ENCODE measurements at regions of chr5 and their contacts with region 1.

Region 1: DNA sequence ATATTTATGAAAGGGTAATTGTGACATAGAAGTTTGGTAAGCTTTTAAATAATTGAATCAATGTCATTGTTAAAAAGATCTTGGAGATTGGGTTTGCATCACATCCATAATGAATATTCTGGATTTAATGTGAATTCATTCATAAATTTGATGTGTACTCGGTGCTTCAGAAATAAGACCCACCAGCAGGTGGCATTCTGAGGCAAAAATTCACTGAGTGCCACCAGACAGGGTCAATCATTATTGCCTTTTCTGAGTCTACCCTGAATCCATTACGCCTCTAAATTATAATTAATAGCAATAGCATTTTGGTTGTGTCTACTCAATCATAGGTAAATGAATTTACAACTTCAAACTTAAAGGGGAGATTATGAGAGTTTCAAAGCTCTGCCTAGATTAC is 1.0 kb downstream of the TRPC7 start:
- DNase-seq: no peak
- H3K4me3 ChIP-seq: no peak overlapping the region
- H3K27ac ChIP-seq: no peak overlapping the region
- H3K4me1 ChIP-seq: no peaks in the 10 kb centered on the region
- H3K27me3 ChIP-seq: peaks cover 0 to 4% (median under 1%) of the 10 kb centered on the region in 4 experiments; a peak in 2 of 7 replicates
- CTCF ChIP-seq: peak in 2 of 3 experiments; percentile 44 to 47; a peak in 3 of 4 replicates
- EP300 ChIP-seq: no peak
- POLR2A ChIP-seq: no peak
- RAD21 ChIP-seq: peak; percentile 70 to 72

Region 2: GRCh38 chr5:136123236-136123768 is 241.0 kb before region 1 on chr5:
- CTCF ChIA-PET with region 1: no interaction called
- POLR2A ChIA-PET with region 1: no interaction called
- DNase-seq: no peak
- H3K4me3 ChIP-seq: no peak overlapping the region
- H3K27ac ChIP-seq: no peak overlapping the region
- H3K4me1 ChIP-seq: no peaks in the 10 kb centered on the region
- H3K27me3 ChIP-seq: no peaks in the 10 kb centered on the region; a peak in 1 of 7 replicates
- CTCF ChIP-seq: no peak
- EP300 ChIP-seq: no peak
- POLR2A ChIP-seq: no peak
- RAD21 ChIP-seq: no peak

Region 3: GRCh38 chr5:136332223-136333015 is 31.9 kb before region 1 on chr5:
- CTCF ChIA-PET with region 1: interaction called, 15 read pairs
- POLR2A ChIA-PET with region 1: interaction called, 3 read pairs
- DNase-seq: no peak
- H3K4me3 ChIP-seq: no peak overlapping the region
- H3K27ac ChIP-seq: no peak overlapping the region
- H3K4me1 ChIP-seq: no peaks in the 10 kb centered on the region
- H3K27me3 ChIP-seq: no peaks in the 10 kb centered on the region
- CTCF ChIP-seq: no peak
- EP300 ChIP-seq: no peak
- POLR2A ChIP-seq: no peak
- RAD21 ChIP-seq: no peak

Region 4: GRCh38 chr5:136350343-136350742 is 14.0 kb before region 1 on chr5:
- CTCF ChIA-PET with region 1: interaction called, 28 read pairs
- POLR2A ChIA-PET with region 1: no interaction called
- DNase-seq: no peak
- H3K4me3 ChIP-seq: no peak overlapping the region
- H3K27ac ChIP-seq: no peak overlapping the region
- H3K4me1 ChIP-seq: no peaks in the 10 kb centered on the region
- H3K27me3 ChIP-seq: no peaks in the 10 kb centered on the region; a peak in 1 of 7 replicates
- CTCF ChIP-seq: no peak
- EP300 ChIP-seq: no peak
- POLR2A ChIP-seq: no peak
- RAD21 ChIP-seq: no peak

Region 5: DNA sequence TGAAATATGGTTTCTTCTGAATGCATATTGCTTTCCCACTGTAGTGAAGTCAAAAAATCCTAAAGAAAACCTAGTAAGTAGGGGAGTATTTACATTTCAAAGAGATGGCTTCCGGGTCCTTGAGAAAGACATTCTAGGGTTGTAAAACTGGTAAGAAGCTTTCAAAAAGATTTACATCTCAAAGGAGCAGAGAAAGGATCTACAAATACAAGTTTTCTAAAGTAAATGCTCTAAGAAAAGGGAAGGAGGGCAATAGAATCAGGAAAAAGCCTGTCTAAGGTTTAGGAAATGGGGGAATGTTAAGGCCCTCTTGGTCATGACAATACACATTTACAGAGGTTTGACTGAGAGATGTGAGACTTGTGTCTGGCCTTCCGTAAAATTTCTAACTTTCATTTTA is 17.8 kb after region 1 on chr5:
- CTCF ChIA-PET with region 1: interaction called, 11 read pairs
- POLR2A ChIA-PET with region 1: no interaction called
- DNase-seq: no peak
- H3K4me3 ChIP-seq: no peak overlapping the region
- H3K27ac ChIP-seq: no peak overlapping the region
- H3K4me1 ChIP-seq: peaks cover 0 to 7% (median 0%) of the 10 kb centered on the region in 4 experiments; a peak in 2 of 7 replicates
- H3K27me3 ChIP-seq: peaks cover 0 to 15% (median 8%) of the 10 kb centered on the region in 4 experiments; a peak in 5 of 7 replicates
- CTCF ChIP-seq: no peak
- EP300 ChIP-seq: peak in 1 of 2 experiments; percentile 76; a peak in 1 of 3 replicates
- POLR2A ChIP-seq: no peak
- RAD21 ChIP-seq: no peak

Region 6: DNA sequence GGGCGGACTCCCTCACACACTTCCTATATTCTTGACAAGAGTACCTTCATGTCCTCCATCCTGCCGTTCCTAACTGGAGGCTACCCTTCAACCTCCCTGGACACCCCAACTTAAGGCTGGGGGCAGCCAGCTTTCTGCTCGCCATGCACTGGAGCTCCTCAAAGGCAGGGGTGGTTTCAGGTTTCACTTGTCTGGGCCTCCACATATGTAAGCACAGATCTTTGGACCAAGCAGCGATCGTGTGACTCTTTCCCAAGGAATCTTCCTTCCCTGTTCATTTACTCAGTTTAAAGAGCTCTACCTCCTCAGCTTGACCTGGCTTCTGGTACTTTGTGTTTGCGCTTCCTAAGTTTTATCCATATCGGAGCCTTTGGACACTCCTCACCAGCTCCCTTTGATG is 35.2 kb after region 1 on chr5:
- CTCF ChIA-PET with region 1: no interaction called
- POLR2A ChIA-PET with region 1: no interaction called
- DNase-seq: no peak
- H3K4me3 ChIP-seq: no peak overlapping the region
- H3K27ac ChIP-seq: no peak overlapping the region
- H3K4me1 ChIP-seq: peaks cover 0 to 9% (median 5%) of the 10 kb centered on the region in 4 experiments; a peak in 5 of 7 replicates
- H3K27me3 ChIP-seq: peaks cover 0 to 3% (median under 1%) of the 10 kb centered on the region in 4 experiments; a peak in 1 of 7 replicates
- CTCF ChIP-seq: no peak
- EP300 ChIP-seq: no peak
- POLR2A ChIP-seq: no peak
- RAD21 ChIP-seq: no peak

Region 7: GRCh38 chr5:136424835-136425584 is 60.7 kb after region 1 on chr5:
- CTCF ChIA-PET with region 1: interaction called, 17 read pairs
- POLR2A ChIA-PET with region 1: no interaction called
- DNase-seq: peak; percentile 58 to 97
- H3K4me3 ChIP-seq: no peak overlapping the region
- H3K27ac ChIP-seq: no peak overlapping the region
- H3K4me1 ChIP-seq: peaks cover 0 to 4% (median under 1%) of the 10 kb centered on the region in 4 experiments; a peak in 4 of 7 replicates
- H3K27me3 ChIP-seq: no peaks in the 10 kb centered on the region; a peak in 2 of 7 replicates
- CTCF ChIP-seq: peak; percentile 83 to 92 (median 86)
- EP300 ChIP-seq: no peak
- POLR2A ChIP-seq: no peak
- RAD21 ChIP-seq: peak; percentile 92 to 96

Region 8: GRCh38 chr5:136686192-136686872 is 322.0 kb after region 1 on chr5:
- CTCF ChIA-PET with region 1: interaction called, 13 read pairs
- POLR2A ChIA-PET with region 1: no interaction called
- DNase-seq: peak in 1 of 2 experiments; percentile 49
- H3K4me3 ChIP-seq: no peak overlapping the region
- H3K27ac ChIP-seq: no peak overlapping the region
- H3K4me1 ChIP-seq: no peaks in the 10 kb centered on the region
- H3K27me3 ChIP-seq: no peaks in the 10 kb centered on the region; a peak in 1 of 7 replicates
- CTCF ChIP-seq: peak in 2 of 3 experiments; percentile 65 to 67; a peak in 3 of 4 replicates
- EP300 ChIP-seq: no peak
- POLR2A ChIP-seq: no peak
- RAD21 ChIP-seq: peak; percentile 80 to 85

Region 9: DNA sequence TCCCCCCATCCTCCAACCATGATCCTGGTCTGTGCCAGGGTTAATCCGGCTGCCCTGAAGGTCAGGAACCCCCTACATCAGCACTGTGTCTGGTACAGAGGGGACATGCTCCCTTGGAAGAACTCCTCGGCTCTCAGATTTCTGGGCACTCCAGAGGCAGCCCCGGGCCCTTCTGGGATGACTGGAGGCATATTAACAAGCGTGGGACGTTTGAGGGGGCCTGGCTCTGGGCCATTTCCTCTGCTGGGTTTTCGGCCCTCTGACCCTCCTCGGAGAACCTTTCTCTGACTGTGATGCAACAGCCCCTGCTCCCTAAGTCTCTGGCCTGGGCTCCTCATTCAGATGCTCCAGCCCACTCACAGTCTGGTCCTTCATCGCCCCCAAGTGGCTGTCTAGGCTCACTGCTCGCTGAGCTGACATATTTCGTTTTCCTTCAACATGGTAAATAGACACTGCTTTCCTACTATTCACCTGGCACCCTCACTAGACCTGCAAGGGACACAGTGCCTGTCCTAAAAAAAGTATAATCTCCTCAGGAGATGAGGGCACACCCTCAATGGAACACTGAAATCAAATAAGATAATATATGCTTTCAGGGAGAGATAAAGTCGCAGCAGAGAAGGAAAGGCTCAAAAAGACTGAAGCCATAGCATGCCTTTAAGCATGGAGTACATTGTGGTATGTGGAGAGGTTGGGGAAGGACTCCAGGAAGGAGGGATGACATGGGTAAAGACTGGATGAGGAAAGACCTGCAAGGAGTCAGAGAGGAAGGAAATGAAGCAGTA is 405.8 kb after region 1 on chr5:
- CTCF ChIA-PET with region 1: interaction called, 48 read pairs
- POLR2A ChIA-PET with region 1: no interaction called
- DNase-seq: peak; percentile 53 to 87
- H3K4me3 ChIP-seq: no peak overlapping the region
- H3K27ac ChIP-seq: no peak overlapping the region
- H3K4me1 ChIP-seq: peaks cover 0 to 2% (median 1%) of the 10 kb centered on the region in 4 experiments; a peak in 3 of 7 replicates
- H3K27me3 ChIP-seq: peaks cover 0 to 1% (median 0%) of the 10 kb centered on the region in 4 experiments; a peak in 1 of 7 replicates
- CTCF ChIP-seq: peak; percentile 87 to 96 (median 91)
- EP300 ChIP-seq: no peak
- POLR2A ChIP-seq: no peak
- RAD21 ChIP-seq: peak; percentile 99 to 100

Region 10: DNA sequence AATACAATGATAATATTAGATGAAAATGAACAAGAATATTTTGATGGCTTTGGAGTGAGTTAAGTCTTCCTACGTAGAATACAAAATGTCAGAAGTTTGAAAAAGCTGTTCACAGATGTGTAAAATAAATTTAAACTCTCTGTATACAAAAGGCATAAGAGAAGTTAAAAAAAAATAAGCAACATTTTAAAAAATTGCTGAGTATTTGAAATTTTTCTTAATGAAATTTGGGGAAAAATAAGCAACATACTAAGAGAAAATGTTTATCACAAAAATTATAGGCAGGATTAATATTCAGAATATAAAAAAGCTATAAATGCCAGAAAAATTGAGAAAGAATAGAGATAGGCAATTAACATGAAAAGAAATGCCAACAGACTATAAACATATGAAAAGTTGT is 471.8 kb after region 1 on chr5:
- CTCF ChIA-PET with region 1: no interaction called
- POLR2A ChIA-PET with region 1: no interaction called
- DNase-seq: no peak
- H3K4me3 ChIP-seq: no peak overlapping the region
- H3K27ac ChIP-seq: no peak overlapping the region
- H3K4me1 ChIP-seq: no peaks in the 10 kb centered on the region
- H3K27me3 ChIP-seq: no peaks in the 10 kb centered on the region
- CTCF ChIP-seq: no peak
- EP300 ChIP-seq: no peak
- POLR2A ChIP-seq: no peak
- RAD21 ChIP-seq: no peak